Caco-2 (cell line): ENCODE measurements at regions of chr4 and their contacts with region 1.

Region 1: DNA sequence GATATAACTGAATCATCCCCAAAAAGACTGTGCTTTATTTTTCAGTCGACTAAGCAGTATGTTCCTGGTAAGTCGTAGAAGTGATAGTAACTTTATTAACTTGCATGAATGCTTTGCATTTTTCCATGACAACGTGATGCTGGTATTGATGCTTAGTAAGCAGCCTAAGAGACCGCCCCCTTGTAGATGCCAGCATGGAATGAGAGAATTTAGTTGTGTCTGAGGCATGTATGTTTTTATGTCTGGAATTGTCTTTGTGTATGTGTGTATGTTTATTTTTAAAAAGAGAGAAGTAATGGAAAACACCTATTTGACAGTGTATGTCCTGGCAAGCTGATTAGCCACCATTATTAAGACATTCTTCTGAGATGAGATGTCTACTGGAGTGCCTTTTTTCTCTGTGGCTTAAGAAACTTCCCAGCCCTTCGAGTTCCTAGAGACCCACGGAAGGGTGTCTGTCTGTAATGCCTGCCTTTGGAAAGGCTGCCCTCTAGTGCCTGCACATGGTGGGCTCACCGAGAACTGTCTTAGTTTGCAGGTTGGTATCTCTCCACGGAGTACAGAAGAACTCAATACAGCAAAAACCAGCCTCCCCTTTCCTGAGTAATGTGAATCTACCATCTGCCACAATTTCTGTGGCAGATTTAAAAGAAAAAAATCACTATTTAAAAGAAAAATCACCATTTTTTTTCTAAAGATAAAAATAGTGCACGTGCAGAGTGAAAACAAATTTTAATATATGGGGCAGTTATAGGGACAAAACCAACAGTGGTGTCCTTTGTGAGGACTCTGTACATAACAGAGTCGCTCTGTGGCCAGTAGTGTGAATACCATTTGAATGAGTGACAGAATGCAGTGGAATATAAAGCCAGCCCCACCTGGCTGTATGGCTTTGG is 85.9 kb downstream of the AASDH start:
- DNase-seq: peak; percentile 81 to 82
- H3K4me3 ChIP-seq: no peak overlapping the region
- H3K4me3 Mint-ChIP-seq: no peak overlapping the region
- H3K27ac Mint-ChIP-seq: peak overlapping the region; percentile 28
- H3K4me1 ChIP-seq: peaks cover 22% of the 10 kb centered on the region
- H3K4me1 Mint-ChIP-seq: peaks cover 13% of the 10 kb centered on the region
- H3K27me3 ChIP-seq: no peaks in the 10 kb centered on the region
- H3K27me3 Mint-ChIP-seq: no peaks in the 10 kb centered on the region
- CTCF ChIP-seq: peak; percentile 92

Region 2: DNA sequence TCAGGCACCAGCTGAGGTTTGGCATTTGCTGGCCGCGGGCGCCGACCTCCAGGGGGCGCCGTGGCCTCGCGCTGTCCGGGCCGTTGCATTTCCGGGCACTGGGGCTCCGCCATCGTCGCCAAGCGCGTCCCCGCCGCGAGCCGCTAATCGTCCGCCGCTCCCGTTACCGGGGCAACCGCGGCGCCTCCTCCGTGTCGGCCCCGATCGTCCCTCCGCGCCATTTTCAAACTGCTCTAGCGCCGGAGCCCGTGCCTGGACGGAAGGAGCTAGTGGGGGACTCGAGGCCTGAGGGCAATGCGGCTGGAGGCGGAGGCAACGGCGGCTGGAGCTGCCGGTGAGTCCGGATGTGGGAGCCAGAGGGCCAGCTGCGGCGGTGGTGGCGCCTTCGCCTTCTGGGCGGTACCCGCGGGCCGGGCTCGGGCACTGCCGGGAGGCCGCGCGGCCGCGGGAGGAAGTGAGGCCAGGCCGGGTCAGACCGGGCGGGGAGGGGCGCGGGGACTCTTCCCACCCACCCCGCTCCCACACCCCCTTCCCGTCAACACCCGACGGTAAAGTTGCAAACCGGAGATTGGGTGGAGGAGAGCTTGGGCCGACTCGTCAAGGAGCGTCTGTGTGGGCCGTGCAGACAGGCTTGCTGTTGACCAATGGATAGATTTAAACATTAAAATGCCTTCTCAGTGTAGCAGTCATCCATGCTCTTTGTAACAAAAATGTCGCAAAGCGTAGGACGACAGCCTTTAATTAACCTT is 352.5 kb before region 1 on chr4 and contains the start of gene CEP135:
- CTCF ChIA-PET with region 1: no interaction called
- POLR2A ChIA-PET with region 1: no interaction called
- intact Hi-C with region 1: loop called (anchors 1 kb)
- DNase-seq: peak; percentile 92 to 95
- H3K4me3 ChIP-seq: peak within 1 kb of the TSS; percentile 85
- H3K4me3 Mint-ChIP-seq: peak within 1 kb of the TSS; percentile 90
- H3K27ac Mint-ChIP-seq: peak within 1 kb of the TSS; percentile 93
- H3K4me1 ChIP-seq: 0 out of 2 replicates have a peak, but pooled peaks cover 10% of the 10 kb centered on the region
- H3K4me1 Mint-ChIP-seq: peaks cover 16% of the 10 kb centered on the region
- H3K27me3 ChIP-seq: no peaks in the 10 kb centered on the region
- H3K27me3 Mint-ChIP-seq: no peaks in the 10 kb centered on the region
- CTCF ChIP-seq: peak; percentile 80 to 90
- total RNA-seq, gene CEP135: 10.5 and 11.3 TPM in 2 replicates

Region 3: GRCh38 chr4:55996611-55997010 is 304.8 kb before region 1 on chr4:
- CTCF ChIA-PET with region 1: no interaction called
- POLR2A ChIA-PET with region 1: no interaction called
- intact Hi-C with region 1: loop called (anchors 5 kb)
- DNase-seq: no peak
- H3K4me3 ChIP-seq: no peak overlapping the region
- H3K4me3 Mint-ChIP-seq: no peak overlapping the region
- H3K27ac Mint-ChIP-seq: no peak overlapping the region
- H3K4me1 ChIP-seq: no peaks in the 10 kb centered on the region
- H3K4me1 Mint-ChIP-seq: no peaks in the 10 kb centered on the region
- H3K27me3 ChIP-seq: no peaks in the 10 kb centered on the region
- H3K27me3 Mint-ChIP-seq: no peaks in the 10 kb centered on the region
- CTCF ChIP-seq: no peak

Region 4: GRCh38 chr4:56048702-56049431 is 252.6 kb before region 1 on chr4:
- CTCF ChIA-PET with region 1: no interaction called
- POLR2A ChIA-PET with region 1: no interaction called
- intact Hi-C with region 1: loop called (anchors 2 kb)
- DNase-seq: peak; percentile 55 to 84
- H3K4me3 ChIP-seq: peak overlapping the region; percentile 86
- H3K4me3 Mint-ChIP-seq: peak overlapping the region; percentile 76
- H3K27ac Mint-ChIP-seq: peak overlapping the region; percentile 37
- H3K4me1 ChIP-seq: no peaks in the 10 kb centered on the region
- H3K4me1 Mint-ChIP-seq: peaks cover 7% of the 10 kb centered on the region
- H3K27me3 ChIP-seq: no peaks in the 10 kb centered on the region
- H3K27me3 Mint-ChIP-seq: peaks cover 2% of the 10 kb centered on the region
- CTCF ChIP-seq: no peak

Region 5: DNA sequence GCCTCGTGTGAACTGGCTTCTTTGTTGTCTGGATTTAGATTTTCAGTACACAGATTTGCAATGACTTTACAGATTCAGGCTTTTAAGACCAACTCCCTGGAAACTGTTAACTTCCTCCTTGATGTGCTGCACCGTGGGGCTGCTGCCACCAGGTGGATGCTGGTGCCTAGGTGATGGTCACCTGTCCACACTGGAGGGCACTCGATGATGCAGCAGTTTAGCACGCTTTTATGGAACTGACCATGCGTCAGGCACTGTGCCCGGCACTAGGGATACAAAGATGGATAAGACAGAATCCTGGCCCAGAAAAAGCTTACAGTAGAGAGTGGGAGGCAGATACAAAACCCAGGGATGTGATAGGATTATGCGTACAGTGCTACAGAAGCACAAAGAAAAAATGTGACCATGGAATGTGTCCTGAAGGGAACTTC is 172.0 kb before region 1 on chr4:
- CTCF ChIA-PET with region 1: no interaction called
- POLR2A ChIA-PET with region 1: no interaction called
- intact Hi-C with region 1: loop called (anchors 1 kb)
- DNase-seq: peak; percentile 72 to 75
- H3K4me3 ChIP-seq: no peak overlapping the region
- H3K4me3 Mint-ChIP-seq: no peak overlapping the region
- H3K27ac Mint-ChIP-seq: peak overlapping the region; percentile 6
- H3K4me1 ChIP-seq: peaks cover 23% of the 10 kb centered on the region
- H3K4me1 Mint-ChIP-seq: peaks cover 24% of the 10 kb centered on the region
- H3K27me3 ChIP-seq: no peaks in the 10 kb centered on the region
- H3K27me3 Mint-ChIP-seq: no peaks in the 10 kb centered on the region
- CTCF ChIP-seq: peak; percentile 51 to 88

Region 6: DNA sequence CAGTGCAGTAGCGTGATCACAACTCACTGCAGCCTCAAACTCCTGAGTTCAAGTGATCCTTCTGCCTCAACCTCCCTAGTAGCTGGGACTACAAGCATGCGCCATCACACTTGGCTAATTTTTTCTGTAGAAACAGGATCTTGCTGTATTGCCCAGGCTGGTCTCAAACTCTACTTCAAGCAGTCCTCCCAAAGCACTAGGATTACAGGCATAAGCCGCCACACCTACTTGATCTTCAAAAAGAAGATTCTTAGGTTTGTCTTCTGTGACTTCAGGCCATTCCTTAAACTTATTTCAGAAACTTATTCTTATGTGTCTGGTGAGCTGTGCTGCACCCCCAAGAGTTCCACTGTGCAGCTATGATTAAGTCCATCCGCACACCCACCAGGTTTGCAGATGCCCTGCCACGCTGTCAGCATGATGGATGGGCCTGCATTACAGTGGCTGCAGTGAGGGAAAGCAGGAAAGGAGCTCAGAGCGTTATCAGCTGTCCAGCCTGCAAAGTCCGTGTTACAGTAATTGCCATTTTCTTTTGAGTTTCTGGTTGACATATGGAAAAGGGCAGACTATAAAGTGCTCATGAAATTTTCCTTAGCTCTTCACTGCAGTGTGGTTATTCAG is 60.8 kb before region 1 on chr4:
- CTCF ChIA-PET with region 1: no interaction called
- POLR2A ChIA-PET with region 1: no interaction called
- intact Hi-C with region 1: loop called (anchors 1 kb)
- DNase-seq: peak; percentile 54 to 83
- H3K4me3 ChIP-seq: peak overlapping the region; percentile 12; the same call in 1 of the 2 replicates
- H3K4me3 Mint-ChIP-seq: peak overlapping the region; percentile 64
- H3K27ac Mint-ChIP-seq: peak overlapping the region; percentile 88
- H3K4me1 ChIP-seq: peaks cover 83% of the 10 kb centered on the region
- H3K4me1 Mint-ChIP-seq: peaks cover 68% of the 10 kb centered on the region
- H3K27me3 ChIP-seq: no peaks in the 10 kb centered on the region
- H3K27me3 Mint-ChIP-seq: no peaks in the 10 kb centered on the region
- CTCF ChIP-seq: no peak

Region 7: DNA sequence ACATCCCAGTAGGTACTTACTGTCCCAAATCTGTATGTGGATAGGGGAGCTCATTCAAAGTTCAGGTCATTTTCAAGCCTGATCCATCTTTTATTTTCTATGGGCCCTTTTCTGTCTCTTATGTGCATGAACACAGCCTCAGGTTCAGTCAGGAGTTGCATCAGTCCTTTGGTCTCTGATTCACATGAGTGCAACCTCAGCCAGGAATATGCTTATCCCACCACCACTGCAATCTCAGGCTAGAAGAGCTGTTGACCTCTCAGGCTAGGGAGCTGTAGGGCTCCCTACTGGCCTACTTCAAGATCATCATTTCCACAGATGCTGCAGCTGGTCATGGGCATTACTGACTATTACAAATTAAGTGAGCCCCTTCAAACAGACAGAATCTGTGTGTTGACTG is 58.6 kb after region 1 on chr4:
- CTCF ChIA-PET with region 1: no interaction called
- POLR2A ChIA-PET with region 1: no interaction called
- intact Hi-C with region 1: no loop called
- DNase-seq: no peak
- H3K4me3 ChIP-seq: no peak overlapping the region
- H3K4me3 Mint-ChIP-seq: no peak overlapping the region
- H3K27ac Mint-ChIP-seq: no peak overlapping the region
- H3K4me1 ChIP-seq: no peaks in the 10 kb centered on the region
- H3K4me1 Mint-ChIP-seq: no peaks in the 10 kb centered on the region
- H3K27me3 ChIP-seq: no peaks in the 10 kb centered on the region
- H3K27me3 Mint-ChIP-seq: no peaks in the 10 kb centered on the region
- CTCF ChIP-seq: no peak